ENCODE measurements at regions of chr5 and their contacts with region 1.

Region 1: GRCh38 chr5:96687812-96688453 is 25.8 kb downstream of the CAST start:
- DNase-seq: peak in 3 of 14 experiments; percentile 44 to 59 (median 59)
- ATAC-seq: peak; percentile 99
- H3K4me3 ChIP-seq: no peak overlapping the region
- H3K4me3 Mint-ChIP-seq: peak overlapping the region; percentile 48
- H3K27ac ChIP-seq: no peak overlapping the region
- H3K27ac Mint-ChIP-seq: no peak overlapping the region
- H3K4me1 ChIP-seq: peaks cover 3% of the 10 kb centered on the region
- H3K4me1 Mint-ChIP-seq: peaks cover 30% of the 10 kb centered on the region
- H3K27me3 ChIP-seq: no peaks in the 10 kb centered on the region
- H3K27me3 Mint-ChIP-seq: no peaks in the 10 kb centered on the region
- CTCF ChIP-seq: peak; percentile 68

Region 2: DNA sequence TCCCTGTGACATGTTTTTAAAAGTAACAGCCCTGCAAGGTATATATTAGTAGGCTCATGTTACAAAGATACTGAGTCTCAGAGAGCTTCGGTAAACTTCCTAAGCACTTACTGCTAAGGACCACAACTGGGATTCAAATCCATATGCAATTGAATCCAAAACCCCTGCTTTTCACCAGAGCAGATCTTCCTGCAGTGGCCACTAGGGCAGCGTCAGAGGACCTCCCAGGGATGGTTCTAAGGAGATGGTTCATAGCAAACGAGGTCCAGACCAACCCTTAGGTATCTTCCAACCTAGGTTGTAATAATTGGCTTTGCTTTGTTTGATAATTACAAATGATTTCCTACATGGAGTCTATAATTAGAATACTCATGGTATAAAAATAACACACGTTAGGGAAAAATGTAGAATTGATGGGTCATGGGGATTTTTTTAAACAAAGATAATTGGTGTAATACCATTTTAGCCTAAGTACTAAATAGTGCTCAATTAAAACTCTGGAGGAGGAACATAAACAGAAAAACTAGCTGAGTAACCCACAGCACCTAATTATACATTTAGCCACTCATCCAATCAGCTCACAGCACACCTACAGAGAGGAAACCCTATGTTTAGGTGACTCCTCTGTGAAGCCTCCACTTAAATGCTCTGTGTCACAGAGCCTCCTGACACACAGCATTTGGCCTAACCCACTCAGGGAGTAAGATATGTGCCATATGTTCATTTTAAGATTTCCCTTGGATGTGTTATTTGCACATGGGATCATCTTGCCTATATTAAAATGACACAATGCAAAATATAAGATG is 35.8 kb before region 1 on chr5:
- CTCF ChIA-PET with region 1: no interaction called
- POLR2A ChIA-PET with region 1: no interaction called
- intact Hi-C with region 1: loop called in 1 of 2 experiments (anchors 5 kb)
- DNase-seq: peak in 3 of 14 experiments; percentile 26 to 38 (median 26)
- ATAC-seq: peak; percentile 59
- H3K4me3 ChIP-seq: no peak overlapping the region
- H3K4me3 Mint-ChIP-seq: no peak overlapping the region
- H3K27ac ChIP-seq: no peak overlapping the region
- H3K27ac Mint-ChIP-seq: no peak overlapping the region
- H3K4me1 ChIP-seq: peaks cover 12% of the 10 kb centered on the region
- H3K4me1 Mint-ChIP-seq: peaks cover 7% of the 10 kb centered on the region
- H3K27me3 ChIP-seq: no peaks in the 10 kb centered on the region
- H3K27me3 Mint-ChIP-seq: peaks cover 25% of the 10 kb centered on the region
- CTCF ChIP-seq: peak; percentile 23